Gastrocnemius medialis (tissue), 4 donors: ENCODE measurements at regions of chr5 and their contacts with region 1.

Region 1: DNA sequence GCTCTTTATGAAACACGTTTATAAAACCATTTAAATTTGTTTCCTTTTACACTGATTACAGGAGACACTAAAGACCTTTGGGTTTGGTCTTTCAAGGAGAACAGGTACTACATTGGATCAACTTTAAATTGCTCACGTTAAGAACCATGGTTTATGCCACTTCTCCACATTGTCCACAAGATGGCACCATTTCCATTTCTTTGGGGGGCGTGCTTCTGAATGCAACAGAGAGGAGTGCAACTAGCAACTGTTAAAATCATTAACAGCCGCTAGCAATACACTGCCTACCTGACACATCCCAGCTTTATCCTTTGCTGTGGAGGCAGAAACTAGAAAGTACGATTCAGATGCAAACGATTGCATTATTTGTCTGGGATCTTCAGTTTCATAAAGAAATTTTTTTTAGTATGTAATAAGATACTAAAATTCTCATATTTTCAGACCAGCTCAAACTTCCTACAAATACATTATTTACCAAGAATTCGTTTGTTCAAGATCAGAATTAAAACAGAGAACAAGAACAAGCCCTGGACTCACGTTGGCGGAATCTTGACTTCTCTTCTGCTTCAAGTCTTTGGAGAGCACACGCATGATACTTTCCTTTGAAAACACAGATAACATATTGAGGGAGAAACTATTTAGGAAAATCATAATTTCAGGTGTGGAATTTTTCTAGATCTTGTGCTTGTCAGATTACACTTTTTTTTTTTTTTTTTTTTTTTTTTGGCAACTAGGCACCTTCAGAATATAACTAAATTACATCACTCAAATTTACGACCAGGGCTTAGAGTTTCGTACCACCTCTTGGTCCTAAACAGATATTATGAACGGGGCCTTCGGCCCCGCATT is 702 bp downstream of the CDC20B start:
- DNase-seq: peak in 1 of 2 donors; percentile 34
- ATAC-seq: peak; percentile 84 to 91
- H3K4me3 ChIP-seq: peak overlapping the region; percentile 44 to 67 (median 60)
- H3K27ac ChIP-seq: no peak overlapping the region
- H3K4me1 ChIP-seq: peaks cover 20 to 27% of the 10 kb centered on the region in 2 donors
- H3K27me3 ChIP-seq: peaks cover 39 to 44% (median 39%) of the 10 kb centered on the region in 3 donors
- CTCF ChIP-seq: peak; percentile 50 to 85 (median 71)
- POLR2A ChIP-seq: no peak

Region 2: DNA sequence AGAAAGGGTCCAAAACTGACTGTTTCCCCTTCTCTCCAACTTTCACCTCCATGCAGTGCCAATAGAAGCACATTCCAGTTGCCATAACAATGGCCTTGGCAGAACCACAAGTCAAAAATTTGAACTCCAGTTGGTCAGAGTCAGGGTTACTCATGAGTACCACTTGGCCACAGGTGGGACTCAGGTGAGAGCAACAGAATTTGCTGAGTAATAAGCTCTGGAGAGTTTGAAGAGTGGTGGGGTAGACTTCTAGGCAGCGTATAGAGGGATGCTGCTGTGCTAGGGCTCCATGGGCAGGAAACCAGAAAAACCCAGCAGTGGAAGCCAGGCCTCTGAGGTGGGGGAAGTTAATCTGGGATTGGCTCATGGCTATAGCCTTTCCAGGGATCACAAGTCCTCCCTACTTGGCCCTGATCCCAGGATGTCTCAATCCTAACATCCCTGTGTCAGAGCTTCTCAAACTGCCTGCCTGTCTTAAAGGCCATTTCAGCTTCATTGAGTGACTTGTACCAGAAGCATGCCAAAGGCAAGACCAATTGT is 624.5 kb before region 1 on chr5:
- in situ Hi-C with region 1: loop called in 1 of 4 experiments (anchors 25 kb)
- intact Hi-C with region 1: no loop called
- DNase-seq: peak; percentile 70 to 81
- ATAC-seq: peak; percentile 99 to 100
- H3K4me3 ChIP-seq: no peak overlapping the region
- H3K27ac ChIP-seq: peak overlapping the region in 3 of 4 donors; percentile 15 to 45 (median 28)
- H3K4me1 ChIP-seq: peaks cover 4 to 11% of the 10 kb centered on the region in 2 donors
- H3K27me3 ChIP-seq: no peaks in the 10 kb centered on the region
- CTCF ChIP-seq: no peak
- POLR2A ChIP-seq: no peak

Region 3: DNA sequence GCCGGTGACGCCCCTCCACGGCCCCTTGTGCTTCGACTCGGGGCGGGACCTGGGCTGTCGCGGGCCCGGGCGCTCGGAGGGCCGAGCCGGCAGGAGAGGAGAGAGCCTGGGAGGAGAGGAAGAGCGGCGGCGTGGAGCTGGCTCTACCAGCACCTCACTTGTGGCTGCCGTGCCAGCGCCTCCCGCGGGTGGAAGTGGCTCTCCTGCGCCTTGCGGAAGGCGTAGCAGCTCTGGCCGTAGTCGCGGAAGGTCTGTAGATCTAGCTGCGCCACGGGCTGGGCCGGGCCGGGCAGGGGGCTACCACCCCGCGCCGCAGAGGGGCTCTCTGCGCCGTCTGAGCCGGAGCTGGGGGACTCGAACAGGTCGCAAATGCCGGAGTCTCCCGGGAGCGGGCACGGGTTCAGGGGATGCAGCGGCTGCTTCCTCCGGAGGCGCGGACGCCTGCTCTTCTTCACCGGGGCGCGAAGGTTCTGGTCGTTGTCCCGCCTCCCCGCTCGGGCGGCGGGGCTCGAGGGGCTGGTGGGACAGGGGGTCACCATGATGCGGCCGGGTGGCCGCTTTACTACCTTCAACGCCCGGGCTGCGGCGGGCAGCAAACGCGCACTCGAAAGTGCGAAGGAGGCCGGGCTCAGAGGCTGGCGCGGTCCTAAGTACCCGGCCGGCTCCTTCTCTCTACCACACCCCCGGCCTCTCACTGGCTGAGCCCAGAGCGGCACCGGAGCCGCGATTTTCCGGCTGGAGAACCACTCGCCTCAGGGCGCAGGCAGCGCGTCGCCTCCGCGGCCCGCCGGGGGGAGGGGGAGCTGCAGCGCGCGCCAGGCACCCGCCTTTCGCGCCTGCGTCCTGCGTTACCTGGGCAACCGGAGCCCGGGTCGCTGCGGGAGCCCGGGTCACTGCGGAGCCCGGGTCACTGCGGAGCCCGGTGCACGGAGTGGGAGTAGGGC is 61.0 kb after region 1 on chr5 and contains the start of gene CCNO:
- in situ Hi-C with region 1: loop called in 1 of 4 experiments (anchors 5 kb)
- intact Hi-C with region 1: loop called (anchors 2 kb)
- DNase-seq: no peak
- ATAC-seq: peak; percentile 53 to 57
- H3K4me3 ChIP-seq: peak within 1 kb of the TSS; percentile 55 to 90 (median 60)
- H3K27ac ChIP-seq: no peak within 1 kb of the TSS
- H3K4me1 ChIP-seq: peaks cover 30 to 32% of the 10 kb centered on the region in 2 donors
- H3K27me3 ChIP-seq: peaks cover 84 to 90% (median 88%) of the 10 kb centered on the region in 3 donors
- CTCF ChIP-seq: no peak
- POLR2A ChIP-seq: no peak
- total RNA-seq, gene CCNO: not detected

Region 4: GRCh38 chr5:55307383-55308253 is 135.3 kb after region 1 on chr5 and contains the starts of genes DHX29 and MTREX:
- in situ Hi-C with region 1: no loop called
- intact Hi-C with region 1: loop called (anchors 5 kb)
- DNase-seq: peak; percentile 84 to 86
- ATAC-seq: peak; percentile 96
- H3K4me3 ChIP-seq: peak within 1 kb of the TSS; percentile 64 to 97 (median 86)
- H3K27ac ChIP-seq: peak within 1 kb of the TSS; percentile 86 to 96 (median 95)
- H3K4me1 ChIP-seq: peaks cover 47 to 68% of the 10 kb centered on the region in 2 donors
- H3K27me3 ChIP-seq: no peaks in the 10 kb centered on the region
- CTCF ChIP-seq: no peak
- POLR2A ChIP-seq: peak; percentile 63 to 64
- total RNA-seq, gene DHX29: 33.1 to 44.6 (median 41.0) TPM
- total RNA-seq, gene MTREX: 92.4 to 124 (median 109) TPM

Region 5: GRCh38 chr5:55691265-55692105 is 519.2 kb after region 1 on chr5:
- in situ Hi-C with region 1: no loop called
- intact Hi-C with region 1: loop called (anchors 5 kb)
- DNase-seq: peak in 1 of 2 donors; percentile 7
- ATAC-seq: peak; percentile 86 to 87
- H3K4me3 ChIP-seq: peak overlapping the region in 3 of 4 donors; percentile 11 to 39 (median 12)
- H3K27ac ChIP-seq: peak overlapping the region; percentile 2 to 37 (median 17)
- H3K4me1 ChIP-seq: peaks cover 17 to 20% of the 10 kb centered on the region in 2 donors
- H3K27me3 ChIP-seq: no peaks in the 10 kb centered on the region
- CTCF ChIP-seq: peak; percentile 63 to 89 (median 69)
- POLR2A ChIP-seq: no peak

Region 6: GRCh38 chr5:55711968-55712859 is 539.9 kb after region 1 on chr5 and contains the start of gene SLC38A9:
- in situ Hi-C with region 1: loop called in 1 of 4 experiments (anchors 25 kb)
- intact Hi-C with region 1: no loop called
- DNase-seq: peak; percentile 92
- ATAC-seq: peak; percentile 98 to 99
- H3K4me3 ChIP-seq: peak within 1 kb of the TSS; percentile 79 to 94 (median 87)
- H3K27ac ChIP-seq: peak within 1 kb of the TSS; percentile 74 to 85 (median 80)
- H3K4me1 ChIP-seq: peaks cover 5 to 8% of the 10 kb centered on the region in 2 donors
- H3K27me3 ChIP-seq: no peaks in the 10 kb centered on the region
- CTCF ChIP-seq: no peak
- POLR2A ChIP-seq: no peak
- total RNA-seq, gene SLC38A9: 5.4 to 11.9 (median 10.2) TPM